ENCODE measurements at regions of chr19 and their contacts with region 1.

Region 1: DNA sequence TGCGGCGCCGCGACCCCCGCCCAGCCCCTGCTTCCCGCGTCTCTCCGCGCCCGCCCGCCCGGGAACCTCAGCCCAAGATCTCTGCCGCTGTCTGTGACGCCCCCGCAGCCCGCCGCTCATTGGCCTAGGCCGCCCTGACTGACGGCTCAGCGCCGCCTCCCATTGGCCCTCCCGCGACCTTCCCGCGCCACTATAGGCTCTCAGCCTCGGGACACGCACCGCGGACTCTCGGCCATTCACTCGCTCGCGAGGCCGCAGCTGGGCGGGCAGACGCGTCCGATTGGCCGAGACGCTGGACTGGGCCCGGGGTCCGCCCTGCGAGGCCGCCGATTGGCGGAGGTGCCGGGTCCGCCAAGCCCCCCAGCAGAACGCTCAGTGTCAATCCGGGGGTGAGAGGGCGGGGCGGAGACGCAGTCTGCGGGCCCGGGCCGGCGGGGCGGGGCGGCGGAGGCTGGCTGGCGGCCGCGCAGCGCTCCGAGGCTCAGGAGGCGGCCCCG is at the start of gene PRKACA:
- DNase-seq: peak; percentile 73
- ATAC-seq: peak; percentile 95
- H3K4me3 ChIP-seq: peak within 1 kb of the TSS; percentile 62 to 65
- H3K27ac ChIP-seq: peak within 1 kb of the TSS; percentile 92
- H3K4me1 ChIP-seq: peaks cover 37% of the 10 kb centered on the region
- H3K27me3 ChIP-seq: no peaks in the 10 kb centered on the region
- CTCF ChIP-seq: no peak
- total RNA-seq, gene PRKACA: 70.8 TPM

Region 2: GRCh38 chr19:14048443-14049153 is 69.1 kb before region 1 on chr19:
- CTCF ChIA-PET with region 1: no interaction called
- POLR2A ChIA-PET with region 1: interaction called, 11 read pairs
- in situ Hi-C with region 1: no loop called
- intact Hi-C with region 1: no loop called
- DNase-seq: no peak
- ATAC-seq: peak; percentile 84
- H3K4me3 ChIP-seq: no peak overlapping the region
- H3K27ac ChIP-seq: no peak overlapping the region
- H3K4me1 ChIP-seq: no peaks in the 10 kb centered on the region
- H3K27me3 ChIP-seq: no peaks in the 10 kb centered on the region
- CTCF ChIP-seq: peak; percentile 92